ENCODE measurements at regions of chr16 and their contacts with region 1.

Region 1: GRCh38 chr16:3580689-3581088 is 3.5 kb upstream of the NLRC3 start:
- DNase-seq: no peak

Region 2: DNA sequence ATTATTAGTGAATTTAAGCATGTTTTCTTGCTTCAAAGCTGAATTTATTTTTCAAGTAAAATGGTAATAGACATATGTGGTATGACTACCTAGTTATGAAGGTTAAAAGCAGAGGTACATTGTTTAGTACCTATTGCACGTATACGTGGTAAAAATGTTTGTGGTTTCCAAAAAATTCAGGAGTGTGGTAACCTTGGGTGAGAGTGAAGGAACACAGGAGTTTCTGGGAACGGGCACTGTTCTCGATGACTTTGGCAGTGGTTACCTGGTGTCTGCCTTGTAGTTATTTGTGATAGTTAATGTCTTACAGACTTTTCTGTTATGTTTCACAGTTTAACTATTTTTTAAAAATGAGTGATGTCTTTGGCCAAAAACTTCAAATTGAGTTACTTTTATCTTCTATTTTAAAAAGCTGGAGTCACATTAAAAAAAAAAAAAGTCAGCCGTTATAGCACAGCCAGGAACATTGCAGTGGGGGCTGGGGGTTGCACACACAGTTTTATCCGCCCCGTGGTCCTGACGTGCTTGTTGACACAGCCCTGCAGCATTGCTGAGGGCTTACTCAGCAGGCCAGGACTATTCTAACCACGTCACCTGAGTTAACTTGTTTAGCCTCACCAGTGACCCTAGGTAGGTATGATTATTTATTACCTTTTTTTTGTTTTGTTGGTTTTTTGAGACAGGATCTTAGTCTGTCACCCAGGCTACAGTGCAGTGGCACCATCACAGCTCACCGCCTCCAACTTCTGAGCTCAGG is 1891.7 kb before region 1 on chr16:
- intact Hi-C with region 1: no loop called
- DNase-seq: no peak

Region 3: GRCh38 chr16:1826691-1827575 is 1753.8 kb before region 1 on chr16 and contains the starts of genes FAHD1 and HAGH:
- intact Hi-C with region 1: loop called in 1 of 2 experiments (anchors 10 kb)
- DNase-seq: peak; percentile 98
- total RNA-seq, gene FAHD1: 14.0 to 17.3 TPM
- total RNA-seq, gene HAGH: 36.1 to 48.2 TPM

Region 4: GRCh38 chr16:3564130-3564888 is 16.4 kb before region 1 on chr16:
- intact Hi-C with region 1: loop called in 1 of 2 experiments (anchors 1 kb)
- DNase-seq: no peak